ENCODE measurements at regions of chr9 and their contacts with region 1.

Region 1: GRCh38 chr9:130243015-130243734 is 22.4 kb upstream of the HMCN2 start:
- DNase-seq: peak; percentile 89
- ATAC-seq: peak; percentile 83
- H3K4me3 Mint-ChIP-seq: peak overlapping the region; percentile 52
- H3K27ac Mint-ChIP-seq: no peak overlapping the region
- H3K4me1 Mint-ChIP-seq: peaks cover 10% of the 10 kb centered on the region
- H3K27me3 Mint-ChIP-seq: peaks cover 14% of the 10 kb centered on the region
- CTCF ChIP-seq: peak; percentile 99

Region 2: GRCh38 chr9:130254752-130255630 is 11.8 kb after region 1 on chr9:
- CTCF ChIA-PET with region 1: interaction called, 15 read pairs
- POLR2A ChIA-PET with region 1: no interaction called
- DNase-seq: no peak
- ATAC-seq: no peak
- H3K4me3 Mint-ChIP-seq: no peak overlapping the region
- H3K27ac Mint-ChIP-seq: no peak overlapping the region
- H3K4me1 Mint-ChIP-seq: peaks cover 7% of the 10 kb centered on the region; the same call in 1 of the 2 replicates
- H3K27me3 Mint-ChIP-seq: no peaks in the 10 kb centered on the region; the same call in 1 of the 2 replicates
- CTCF ChIP-seq: no peak

Region 3: GRCh38 chr9:130333041-130333711 is 90.0 kb after region 1 on chr9:
- CTCF ChIA-PET with region 1: no interaction called
- POLR2A ChIA-PET with region 1: no interaction called
- DNase-seq: no peak
- ATAC-seq: no peak
- H3K4me3 Mint-ChIP-seq: no peak overlapping the region
- H3K27ac Mint-ChIP-seq: 0 out of 2 replicates have a peak overlapping the region, but pooled peaks have one; percentile 39
- H3K4me1 Mint-ChIP-seq: peaks cover 7% of the 10 kb centered on the region
- H3K27me3 Mint-ChIP-seq: no peaks in the 10 kb centered on the region
- CTCF ChIP-seq: no peak

Measured in WTC11 (cell line).